H1 (cell line): ENCODE measurements at regions of chr6 and their contacts with region 1.

Region 1: GRCh38 chr6:158910484-158911348 is 89.3 kb downstream of the RSPH3 start:
- DNase-seq: peak in 1 of 2 experiments; percentile 82
- H3K4me3 ChIP-seq: peak overlapping the region in 2 of 4 experiments; percentile 8 to 41; a peak in 4 of 8 replicates
- H3K27ac ChIP-seq: peak overlapping the region; percentile 74
- H3K4me1 ChIP-seq: peaks cover 3 to 28% (median 11%) of the 10 kb centered on the region in 4 experiments
- H3K27me3 ChIP-seq: no peaks in the 10 kb centered on the region
- CTCF ChIP-seq: peak in 2 of 3 experiments; percentile 13 to 37; a peak in 2 of 4 replicates
- EP300 ChIP-seq: peak in 1 of 2 experiments; percentile 91; a peak in 1 of 3 replicates
- POLR2A ChIP-seq: peak; percentile 49 to 70
- RAD21 ChIP-seq: peak; percentile 29 to 54; a peak in 3 of 4 replicates

Region 2: DNA sequence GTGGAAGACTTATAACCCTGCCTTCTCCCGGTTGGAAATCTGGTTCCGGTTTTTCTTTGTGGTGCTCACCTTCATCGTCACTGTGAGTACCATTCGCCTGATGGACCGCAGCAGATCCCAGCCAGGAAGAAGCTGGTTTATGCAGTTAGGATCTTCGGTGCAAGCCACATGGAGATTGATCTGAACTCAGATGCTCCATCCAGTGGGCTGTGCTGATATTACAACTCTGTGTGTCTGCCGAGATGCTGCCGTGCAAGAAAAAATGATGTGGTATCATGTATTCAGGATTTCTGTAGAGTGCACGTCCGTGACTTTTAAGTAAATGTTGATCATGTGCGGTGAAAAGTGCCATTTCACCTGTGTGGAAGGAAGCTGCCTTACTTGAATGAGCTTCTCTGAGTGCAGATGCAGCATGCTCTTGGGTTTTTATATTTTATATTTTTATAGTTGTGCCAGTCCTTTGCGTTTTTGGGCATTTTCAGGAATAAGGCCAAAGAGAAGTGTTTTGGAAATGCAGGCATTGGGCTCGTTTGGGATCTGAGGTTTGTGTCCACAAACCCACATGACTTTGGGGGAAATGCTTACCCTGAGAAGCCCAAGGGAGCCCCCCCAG is 305.3 kb before region 1 on chr6:
- CTCF ChIA-PET with region 1: no interaction called
- POLR2A ChIA-PET with region 1: no interaction called
- DNase-seq: peak; percentile 39 to 86
- H3K4me3 ChIP-seq: no peak overlapping the region
- H3K27ac ChIP-seq: no peak overlapping the region
- H3K4me1 ChIP-seq: no peaks in the 10 kb centered on the region
- H3K27me3 ChIP-seq: no peaks in the 10 kb centered on the region
- CTCF ChIP-seq: peak; percentile 43 to 84 (median 73)
- EP300 ChIP-seq: no peak
- POLR2A ChIP-seq: no peak
- RAD21 ChIP-seq: peak; percentile 72 to 78

Region 3: GRCh38 chr6:158737710-158738615 is 172.8 kb before region 1 on chr6:
- CTCF ChIA-PET with region 1: no interaction called
- POLR2A ChIA-PET with region 1: no interaction called
- DNase-seq: no peak
- H3K4me3 ChIP-seq: no peak overlapping the region
- H3K27ac ChIP-seq: no peak overlapping the region
- H3K4me1 ChIP-seq: no peaks in the 10 kb centered on the region
- H3K27me3 ChIP-seq: no peaks in the 10 kb centered on the region
- CTCF ChIP-seq: no peak
- EP300 ChIP-seq: no peak
- POLR2A ChIP-seq: no peak
- RAD21 ChIP-seq: no peak

Region 4: DNA sequence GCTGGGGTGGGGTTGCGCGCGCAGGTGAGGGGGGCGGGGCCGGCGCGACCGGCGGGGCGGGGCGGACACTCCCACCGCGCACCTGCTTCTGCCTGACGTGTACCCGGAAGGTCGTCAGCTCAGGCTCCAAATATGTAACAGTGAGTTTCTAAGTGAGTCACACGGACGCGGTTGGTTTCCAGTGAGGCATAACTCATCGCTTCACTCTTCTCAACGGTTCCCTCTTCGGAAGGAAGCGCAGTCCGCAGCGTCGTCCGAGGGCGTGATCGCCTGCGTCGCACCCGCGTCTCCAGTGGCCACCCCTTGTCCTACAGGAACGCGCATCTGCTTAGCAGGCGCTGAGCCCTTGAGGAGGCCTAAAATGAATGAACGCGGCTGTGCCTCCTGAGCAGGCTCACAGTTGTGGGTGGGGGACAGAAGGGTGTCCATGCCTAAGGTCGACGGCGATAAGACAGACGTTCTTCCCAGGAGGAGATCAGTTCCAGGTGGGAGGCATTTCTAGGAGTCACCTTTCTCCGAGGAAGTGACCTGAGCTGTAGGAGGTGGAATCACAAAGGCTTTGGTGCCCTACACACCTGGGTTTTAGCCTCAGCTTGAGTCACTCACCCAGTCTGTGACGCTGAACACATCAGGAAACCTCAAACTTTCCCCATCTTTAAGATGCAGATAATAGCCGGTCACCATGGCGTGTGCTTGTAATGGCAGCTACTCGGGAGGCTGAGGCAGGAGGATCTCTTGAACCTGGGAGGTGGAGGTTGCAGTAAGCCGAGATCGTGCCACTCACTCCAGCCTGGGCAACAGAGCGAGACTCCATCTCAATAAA is 40.7 kb before region 1 on chr6:
- CTCF ChIA-PET with region 1: interaction called, 4 read pairs
- POLR2A ChIA-PET with region 1: interaction called, 11 read pairs
- DNase-seq: peak in 1 of 2 experiments; percentile 56
- H3K4me3 ChIP-seq: peak overlapping the region; percentile 21 to 53 (median 44); a peak in 6 of 8 replicates
- H3K27ac ChIP-seq: peak overlapping the region; percentile 84
- H3K4me1 ChIP-seq: peaks cover 0 to 3% (median 1%) of the 10 kb centered on the region in 4 experiments; a peak in 2 of 7 replicates
- H3K27me3 ChIP-seq: no peaks in the 10 kb centered on the region
- CTCF ChIP-seq: no peak
- EP300 ChIP-seq: no peak
- POLR2A ChIP-seq: no peak; a peak in 2 of 3 replicates
- RAD21 ChIP-seq: peak in 1 of 2 experiments; percentile 2; a peak in 1 of 4 replicates

Region 5: DNA sequence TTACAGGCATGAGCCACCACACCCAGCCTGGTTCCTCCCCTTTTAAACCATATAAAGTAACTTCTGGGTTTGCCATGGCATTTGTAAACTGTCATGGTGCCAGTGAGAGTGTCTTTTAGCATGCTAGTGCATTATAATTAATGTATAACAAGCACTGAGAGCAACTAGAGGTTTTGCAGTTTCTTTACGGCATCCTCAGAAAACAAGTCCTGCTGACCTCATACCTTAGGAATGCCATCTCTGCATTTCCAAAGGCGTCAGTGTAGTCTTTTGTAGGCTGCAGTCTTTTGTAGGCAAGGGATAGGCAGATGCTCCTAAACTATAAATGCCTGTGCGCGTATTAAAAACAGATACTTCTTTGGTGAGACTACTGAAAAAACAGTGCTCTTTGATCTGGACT is 16.5 kb before region 1 on chr6:
- CTCF ChIA-PET with region 1: interaction called, 8 read pairs
- POLR2A ChIA-PET with region 1: interaction called, 12 read pairs
- DNase-seq: no peak
- H3K4me3 ChIP-seq: no peak overlapping the region
- H3K27ac ChIP-seq: peak overlapping the region; percentile 29; the same call in 1 of the 2 replicates
- H3K4me1 ChIP-seq: peaks cover 0 to 11% (median 0%) of the 10 kb centered on the region in 4 experiments; a peak in 3 of 7 replicates
- H3K27me3 ChIP-seq: no peaks in the 10 kb centered on the region
- CTCF ChIP-seq: no peak
- EP300 ChIP-seq: no peak; a peak in 1 of 3 replicates
- POLR2A ChIP-seq: no peak
- RAD21 ChIP-seq: no peak